Activated CD4-positive, alpha-beta memory T cell treated with anti-CD3 and anti-CD28 coated beads for 36 hours (primary cell): ENCODE measurements at regions of chr10 and their contacts with region 1.

Region 1: DNA sequence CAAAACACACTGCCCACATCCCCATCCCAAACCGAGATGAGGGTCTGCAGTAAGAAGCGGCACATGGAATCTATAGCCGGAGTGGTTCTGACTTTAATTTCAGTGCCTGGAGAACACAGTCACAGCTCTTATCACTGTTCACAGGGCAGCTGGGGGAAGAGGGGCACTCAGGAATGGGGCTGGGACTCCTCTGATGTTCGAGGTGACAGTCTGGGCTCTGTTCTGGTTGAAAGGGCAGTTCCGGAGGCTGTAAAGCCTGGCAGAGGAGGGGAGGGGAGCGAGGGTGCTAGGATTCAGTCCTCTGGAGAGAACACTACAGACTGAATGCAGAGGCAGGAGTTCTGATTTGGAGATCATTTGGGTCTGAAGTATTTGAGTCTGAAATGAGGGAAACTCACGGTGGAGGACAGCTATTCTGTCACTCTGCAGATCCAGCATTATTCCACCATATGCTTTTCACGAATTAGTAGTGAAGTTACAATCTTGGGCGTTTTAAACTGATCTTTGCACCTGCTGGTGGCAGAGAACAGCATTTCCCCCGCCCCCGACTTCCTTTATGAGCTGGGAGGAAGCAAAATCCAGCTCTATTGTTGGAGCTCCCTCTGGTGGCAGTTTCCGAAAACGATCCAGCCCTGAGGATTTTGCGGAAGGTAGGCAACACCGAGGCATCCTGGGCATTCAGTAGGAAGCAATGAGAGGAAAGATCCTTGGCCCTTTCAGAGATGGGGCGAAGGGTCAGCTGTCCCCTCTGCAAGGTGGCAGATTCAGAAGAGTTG is 22.7 kb upstream of the KCNK18 start:
- DNase-seq: peak; percentile 91
- H3K4me3 Mint-ChIP-seq: peak overlapping the region; percentile 65
- H3K27ac Mint-ChIP-seq: no peak overlapping the region
- H3K4me1 Mint-ChIP-seq: peaks cover 14% of the 10 kb centered on the region
- H3K27me3 Mint-ChIP-seq: peaks cover 34% of the 10 kb centered on the region

Region 2: DNA sequence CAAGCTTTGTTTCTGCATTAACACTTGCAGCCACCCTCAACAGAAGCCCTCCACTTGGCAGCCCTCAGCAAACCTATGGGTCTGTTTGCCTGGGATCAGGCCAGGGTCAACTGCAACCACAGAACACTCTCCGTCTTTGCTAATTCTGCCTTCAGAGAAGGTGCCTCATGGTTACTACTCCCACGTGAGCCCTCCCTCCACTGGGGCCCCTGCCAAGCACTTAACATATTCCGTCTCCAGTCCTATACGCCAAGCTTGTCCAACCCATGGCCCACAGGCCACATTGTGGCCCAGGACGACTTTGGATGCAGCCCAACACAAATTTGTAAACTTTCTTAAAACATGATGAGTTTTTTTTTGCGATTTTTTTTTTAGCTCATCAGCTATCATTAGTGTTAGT is 487.0 kb before region 1 on chr10:
- CTCF ChIA-PET with region 1: interaction called, 27 read pairs
- POLR2A ChIA-PET with region 1: no interaction called
- intact Hi-C with region 1: loop called (anchors 1 kb)
- DNase-seq: no peak
- H3K4me3 Mint-ChIP-seq: no peak overlapping the region
- H3K27ac Mint-ChIP-seq: no peak overlapping the region
- H3K4me1 Mint-ChIP-seq: no peaks in the 10 kb centered on the region
- H3K27me3 Mint-ChIP-seq: peaks cover 31% of the 10 kb centered on the region

Region 3: GRCh38 chr10:116787893-116788665 is 386.5 kb before region 1 on chr10:
- CTCF ChIA-PET with region 1: interaction called, 47 read pairs
- POLR2A ChIA-PET with region 1: no interaction called
- intact Hi-C with region 1: no loop called
- DNase-seq: peak; percentile 84
- H3K4me3 Mint-ChIP-seq: peak overlapping the region; percentile 16
- H3K27ac Mint-ChIP-seq: no peak overlapping the region
- H3K4me1 Mint-ChIP-seq: peaks cover 18% of the 10 kb centered on the region
- H3K27me3 Mint-ChIP-seq: peaks cover 25% of the 10 kb centered on the region

Region 4: DNA sequence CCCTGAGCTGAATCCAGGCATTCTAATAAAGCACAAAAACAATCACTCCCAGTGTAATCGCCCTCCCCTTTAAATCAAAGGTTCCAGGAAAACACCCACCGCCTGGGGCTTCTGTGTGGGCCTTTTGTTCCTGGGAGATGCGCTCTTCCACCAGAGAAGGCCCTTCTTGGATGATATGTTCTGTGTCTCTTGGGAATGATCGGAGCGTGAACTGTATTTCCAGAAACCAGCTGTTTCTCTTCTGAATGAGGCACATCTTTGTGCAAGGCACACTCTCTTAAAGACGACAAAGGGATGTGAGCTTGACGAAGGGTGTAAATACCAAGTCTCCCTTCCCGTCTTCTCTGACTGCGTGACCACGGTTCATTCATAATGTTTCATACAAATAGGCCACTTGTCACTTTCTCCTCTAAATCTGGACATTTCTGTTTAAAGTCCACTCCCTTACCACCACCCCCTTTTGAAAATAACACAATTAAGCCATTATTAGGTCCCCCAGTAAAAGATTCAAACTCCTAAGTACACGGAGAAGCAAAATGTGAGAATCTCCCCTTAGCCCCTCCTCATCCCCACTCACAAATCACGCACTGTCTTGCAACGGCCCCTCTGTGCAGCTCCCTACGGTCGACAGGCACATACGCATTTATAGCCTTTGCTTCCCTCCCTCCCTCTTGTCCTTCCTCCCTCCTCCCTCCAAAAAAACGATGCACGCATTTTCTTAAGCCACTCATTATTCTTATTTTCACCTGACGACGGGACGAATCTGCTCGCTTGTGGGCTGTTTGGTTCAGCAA is 371.0 kb before region 1 on chr10:
- CTCF ChIA-PET with region 1: interaction called, 26 read pairs
- POLR2A ChIA-PET with region 1: no interaction called
- intact Hi-C with region 1: no loop called
- DNase-seq: no peak
- H3K4me3 Mint-ChIP-seq: no peak overlapping the region
- H3K27ac Mint-ChIP-seq: no peak overlapping the region
- H3K4me1 Mint-ChIP-seq: no peaks in the 10 kb centered on the region
- H3K27me3 Mint-ChIP-seq: peaks cover 9% of the 10 kb centered on the region

Region 5: DNA sequence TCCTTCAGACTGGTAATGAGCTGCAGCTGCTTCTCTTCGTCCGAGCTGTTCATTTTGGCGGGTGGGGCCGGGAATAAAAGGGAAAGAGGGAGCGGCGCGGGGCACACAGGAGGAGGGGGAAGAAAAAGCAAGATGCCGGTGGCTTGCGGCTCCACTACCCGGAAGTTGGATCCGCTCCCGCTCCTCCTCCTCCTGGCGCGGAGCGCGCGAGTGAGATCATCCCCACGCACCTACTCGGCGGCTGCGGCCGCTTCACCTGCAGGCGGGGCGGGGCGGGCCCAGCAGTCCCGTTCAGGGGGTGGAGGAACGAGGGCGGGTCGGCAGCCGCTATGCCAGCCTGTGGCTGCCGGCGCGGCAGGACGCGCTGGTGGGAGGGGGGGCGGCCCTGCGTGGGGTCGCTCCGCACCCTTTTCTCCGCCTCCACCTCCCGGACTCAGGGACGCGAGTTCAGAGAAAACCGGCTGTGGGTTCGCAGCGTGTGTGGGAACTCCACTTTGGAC is 169.6 kb before region 1 on chr10 and contains the start of gene SHTN1:
- CTCF ChIA-PET with region 1: no interaction called
- POLR2A ChIA-PET with region 1: no interaction called
- intact Hi-C with region 1: loop called (anchors 2 kb)
- DNase-seq: peak; percentile 58
- H3K4me3 Mint-ChIP-seq: peak within 1 kb of the TSS; percentile 71
- H3K27ac Mint-ChIP-seq: no peak within 1 kb of the TSS
- H3K4me1 Mint-ChIP-seq: no peaks in the 10 kb centered on the region
- H3K27me3 Mint-ChIP-seq: peaks cover 26% of the 10 kb centered on the region
- total RNA-seq, gene SHTN1: 0.29 to 0.53 TPM

Region 6: GRCh38 chr10:117159390-117159789 is 15.2 kb before region 1 on chr10:
- CTCF ChIA-PET with region 1: interaction called, 37 read pairs
- POLR2A ChIA-PET with region 1: no interaction called
- intact Hi-C with region 1: no loop called
- DNase-seq: no peak
- H3K4me3 Mint-ChIP-seq: no peak overlapping the region
- H3K27ac Mint-ChIP-seq: no peak overlapping the region
- H3K4me1 Mint-ChIP-seq: peaks cover 15% of the 10 kb centered on the region
- H3K27me3 Mint-ChIP-seq: peaks cover 78% of the 10 kb centered on the region